ENCODE measurements at regions of chr12 and their contacts with region 1.

Region 1: DNA sequence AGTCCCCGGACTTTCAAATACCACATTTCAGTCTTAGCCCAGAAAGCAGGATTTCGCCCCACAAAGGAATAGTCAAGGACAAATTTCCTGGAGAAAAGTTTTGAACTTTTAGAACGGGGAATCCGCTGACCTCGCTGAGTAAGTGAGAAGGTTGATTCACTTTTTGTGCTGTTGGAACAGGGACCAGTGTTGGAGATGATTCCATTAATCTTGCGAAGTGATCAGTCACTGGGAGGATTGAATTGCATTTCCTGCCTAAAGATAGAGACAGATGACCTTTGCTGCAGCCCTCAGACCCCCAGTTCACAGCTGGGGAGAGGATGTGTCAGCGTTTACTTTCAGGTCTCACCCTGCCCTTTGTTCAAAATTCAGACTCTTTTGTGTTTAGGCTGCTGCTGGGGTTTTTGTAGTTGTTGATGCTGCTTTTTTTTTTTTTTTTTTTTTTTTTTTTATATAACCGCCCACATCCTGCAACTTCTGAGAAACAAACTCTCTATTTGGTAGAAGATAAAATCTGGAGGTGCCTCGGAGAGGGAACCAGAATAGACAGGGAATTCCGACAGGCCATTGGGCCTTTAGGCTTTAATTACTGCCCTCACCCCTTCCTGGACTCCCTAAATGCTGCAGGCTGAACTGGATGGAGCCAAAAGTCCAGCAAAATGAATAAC is 9.8 kb upstream of the KDM2B start:
- DNase-seq: peak; percentile 68
- H3K4me3 Mint-ChIP-seq: peak overlapping the region; percentile 76
- H3K27ac Mint-ChIP-seq: peak overlapping the region; percentile 97
- H3K4me1 Mint-ChIP-seq: peaks cover 31% of the 10 kb centered on the region
- H3K27me3 Mint-ChIP-seq: no peaks in the 10 kb centered on the region

Region 2: DNA sequence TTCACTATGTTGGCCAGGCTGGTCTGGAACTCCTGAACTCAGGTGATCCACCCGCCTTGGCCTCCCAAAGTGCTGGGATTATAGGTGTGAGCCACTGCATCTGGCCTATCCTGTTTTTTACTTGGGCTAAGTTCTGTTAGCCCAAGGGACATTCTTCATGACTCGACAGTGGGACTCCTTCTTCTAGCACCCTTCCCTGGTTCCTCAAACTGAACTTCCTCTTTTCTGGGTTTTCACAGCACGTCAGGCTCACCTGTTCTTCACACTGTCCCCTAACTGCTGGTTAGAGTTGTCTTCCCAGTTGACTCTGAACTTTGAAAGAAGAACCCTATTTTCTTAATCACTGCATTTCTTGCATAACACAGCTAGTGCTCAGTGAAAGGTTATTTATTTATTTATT is 927.7 kb before region 1 on chr12:
- intact Hi-C with region 1: no loop called
- DNase-seq: no peak
- H3K4me3 Mint-ChIP-seq: no peak overlapping the region
- H3K27ac Mint-ChIP-seq: no peak overlapping the region
- H3K4me1 Mint-ChIP-seq: no peaks in the 10 kb centered on the region
- H3K27me3 Mint-ChIP-seq: peaks cover 3% of the 10 kb centered on the region

Region 3: DNA sequence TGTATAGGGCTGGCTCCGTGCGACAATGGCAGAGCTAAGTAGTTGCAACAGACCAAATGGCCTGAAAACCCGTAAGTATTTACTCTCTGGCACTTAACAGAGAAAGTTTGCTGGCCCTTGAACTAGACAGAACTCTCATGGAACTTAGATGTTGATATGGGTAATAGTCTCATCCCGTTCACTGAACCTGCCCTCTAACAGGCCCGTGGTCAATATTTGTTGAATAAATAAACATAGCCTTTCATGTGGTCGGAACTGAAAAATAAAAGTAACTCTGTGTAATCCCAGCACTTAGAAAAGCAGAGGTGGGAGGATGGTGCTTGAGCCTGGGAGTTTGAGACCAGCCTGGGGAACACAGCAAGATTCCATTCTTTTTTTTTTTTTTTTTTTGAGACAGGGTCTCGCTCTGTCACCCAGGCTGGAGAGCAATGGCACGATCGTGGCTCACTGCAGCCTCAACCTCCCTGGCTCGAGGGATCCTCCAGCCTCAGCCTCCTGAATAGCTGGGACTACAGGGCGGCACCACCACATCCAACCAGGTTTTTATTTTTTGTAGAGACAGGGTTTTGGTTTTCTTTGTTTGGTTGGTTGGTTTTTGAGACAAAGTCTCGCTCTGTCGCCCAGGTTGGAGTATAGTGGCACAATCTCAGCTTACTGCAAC is 39.5 kb before region 1 on chr12:
- intact Hi-C with region 1: no loop called
- DNase-seq: no peak
- H3K4me3 Mint-ChIP-seq: no peak overlapping the region
- H3K27ac Mint-ChIP-seq: no peak overlapping the region
- H3K4me1 Mint-ChIP-seq: peaks cover 2% of the 10 kb centered on the region
- H3K27me3 Mint-ChIP-seq: no peaks in the 10 kb centered on the region

Region 4: DNA sequence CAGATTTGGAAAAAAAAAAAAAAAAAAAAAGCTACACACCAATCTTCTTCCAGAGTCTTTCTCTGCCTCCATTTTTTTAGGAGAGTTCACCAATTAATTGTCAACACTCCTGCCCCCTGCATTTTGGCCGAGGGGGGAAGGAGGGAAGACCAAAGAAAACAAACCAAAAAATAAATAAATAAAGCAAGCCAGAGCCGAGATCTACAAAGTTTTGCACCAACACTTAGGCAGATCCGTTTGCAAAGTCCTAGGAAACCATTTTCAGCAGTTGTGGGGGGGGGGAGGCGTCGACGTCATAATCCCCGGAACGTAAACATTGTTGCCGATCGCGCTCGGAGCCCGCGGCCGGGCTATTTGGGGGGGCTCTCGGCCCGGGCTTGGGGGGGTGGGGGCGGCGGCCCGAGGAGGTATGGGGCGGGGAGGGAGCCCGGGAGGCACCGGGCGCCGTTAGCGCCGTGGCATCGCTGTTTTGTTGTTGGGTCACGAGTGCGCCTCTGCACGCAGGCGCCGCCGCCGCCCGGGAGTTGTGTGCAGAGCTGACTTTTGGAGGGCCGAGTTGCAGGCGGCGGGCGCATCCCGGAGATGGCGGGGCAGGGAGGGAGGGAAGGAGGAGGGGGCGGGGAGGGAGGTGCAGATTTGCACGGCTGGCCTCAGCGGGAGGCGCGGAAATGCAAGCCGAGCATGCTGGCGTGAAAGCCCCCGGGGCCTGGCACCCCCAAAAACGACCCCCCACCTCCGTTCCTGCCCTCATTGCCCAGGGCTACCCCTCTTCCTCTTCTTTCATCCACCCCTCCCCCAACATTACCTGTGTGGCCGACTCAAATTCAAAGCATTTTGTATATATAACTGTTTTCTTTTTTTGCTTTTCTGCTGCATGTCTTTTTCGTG is 10.4 kb before region 1 on chr12:
- intact Hi-C with region 1: loop called (anchors 1 kb)
- DNase-seq: peak; percentile 70
- H3K4me3 Mint-ChIP-seq: peak overlapping the region; percentile 98
- H3K27ac Mint-ChIP-seq: peak overlapping the region; percentile 99
- H3K4me1 Mint-ChIP-seq: peaks cover 31% of the 10 kb centered on the region
- H3K27me3 Mint-ChIP-seq: no peaks in the 10 kb centered on the region

Region 5: GRCh38 chr12:121657305-121658008 is 66.8 kb after region 1 on chr12:
- intact Hi-C with region 1: loop called (anchors 2 kb)
- DNase-seq: no peak
- H3K4me3 Mint-ChIP-seq: peak overlapping the region; percentile 1
- H3K27ac Mint-ChIP-seq: peak overlapping the region; percentile 60
- H3K4me1 Mint-ChIP-seq: peaks cover 51% of the 10 kb centered on the region
- H3K27me3 Mint-ChIP-seq: no peaks in the 10 kb centered on the region

Region 6: DNA sequence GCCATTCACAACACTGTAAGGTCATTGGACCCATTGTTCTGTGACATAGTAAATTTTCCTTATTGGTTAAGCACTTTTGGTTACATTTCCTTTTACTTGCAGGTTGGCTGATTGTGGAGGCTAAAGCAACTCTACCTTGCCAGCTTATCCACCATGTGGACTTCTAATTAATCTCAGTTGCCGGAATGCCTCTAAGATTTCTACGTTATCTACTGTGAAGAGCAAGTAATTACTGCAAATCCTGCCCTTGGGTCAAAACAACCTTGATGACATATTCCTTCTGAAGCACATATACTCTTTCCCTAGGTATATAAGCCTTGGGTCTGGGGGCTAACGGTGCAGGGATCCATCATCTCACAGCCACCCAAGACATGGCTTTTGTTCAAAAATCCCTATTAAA is 98.4 kb after region 1 on chr12:
- intact Hi-C with region 1: loop called (anchors 1 kb)
- DNase-seq: no peak
- H3K4me3 Mint-ChIP-seq: no peak overlapping the region
- H3K27ac Mint-ChIP-seq: no peak overlapping the region
- H3K4me1 Mint-ChIP-seq: peaks cover 5% of the 10 kb centered on the region
- H3K27me3 Mint-ChIP-seq: no peaks in the 10 kb centered on the region